RWPE1 (cell line): ENCODE measurements at regions of chr14 and their contacts with region 1.

Region 1: DNA sequence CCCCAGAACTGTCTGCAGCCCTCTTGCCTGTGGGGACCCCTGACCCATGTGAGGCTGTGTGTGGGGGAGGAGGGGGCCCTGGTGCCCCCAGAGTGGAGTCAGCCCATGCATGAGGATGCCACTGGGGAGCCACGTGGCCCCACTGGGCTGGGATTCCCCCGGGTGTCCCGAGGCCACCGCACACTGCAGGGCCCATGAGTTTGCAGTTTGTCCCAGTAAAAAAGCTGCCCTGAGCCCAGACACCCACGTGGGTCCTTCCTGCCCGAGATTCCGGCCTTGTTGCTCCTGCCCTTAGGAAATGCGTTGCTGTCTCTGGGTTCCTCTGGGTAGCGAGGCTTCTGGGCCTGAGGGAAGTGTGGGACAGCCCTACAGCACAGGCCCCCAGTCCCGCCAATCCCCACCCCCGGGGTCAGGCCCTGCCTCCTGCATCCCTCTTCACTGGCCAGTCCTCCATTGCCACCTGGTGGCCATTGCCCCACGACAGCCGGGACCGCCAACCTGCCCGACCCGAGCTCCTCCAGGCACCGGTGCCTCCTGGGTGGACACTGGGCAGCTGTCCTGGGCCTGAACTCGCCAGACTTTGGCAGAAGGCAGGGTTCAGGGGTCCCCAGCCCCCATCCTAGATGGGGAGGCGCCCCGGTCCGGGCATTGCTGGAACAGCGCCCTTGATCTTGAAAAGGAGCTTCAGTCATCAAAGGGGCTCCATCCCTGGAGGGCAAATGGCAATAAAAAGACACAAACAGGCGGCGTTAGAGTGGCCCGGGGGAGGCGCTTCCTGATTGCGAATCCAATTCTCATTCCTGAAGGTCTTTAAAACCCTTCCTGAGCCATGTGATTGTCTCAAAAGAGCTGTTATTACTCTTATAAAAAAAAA is 15.6 kb upstream of the C14orf180 start:
- DNase-seq: peak; percentile 85
- H3K27ac ChIP-seq: no peak overlapping the region
- CTCF ChIP-seq: peak; percentile 91

Region 2: GRCh38 chr14:104137297-104138097 is 426.5 kb before region 1 on chr14:
- CTCF ChIA-PET with region 1: interaction called, 29 read pairs
- POLR2A ChIA-PET with region 1: no interaction called
- DNase-seq: peak; percentile 67
- H3K27ac ChIP-seq: peak overlapping the region; percentile 9; the same call in 1 of the 2 replicates
- CTCF ChIP-seq: peak; percentile 85

Region 3: GRCh38 chr14:104366931-104367865 is 196.8 kb before region 1 on chr14:
- CTCF ChIA-PET with region 1: interaction called, 11 read pairs
- POLR2A ChIA-PET with region 1: no interaction called
- DNase-seq: no peak
- H3K27ac ChIP-seq: no peak overlapping the region
- CTCF ChIP-seq: no peak

Region 4: DNA sequence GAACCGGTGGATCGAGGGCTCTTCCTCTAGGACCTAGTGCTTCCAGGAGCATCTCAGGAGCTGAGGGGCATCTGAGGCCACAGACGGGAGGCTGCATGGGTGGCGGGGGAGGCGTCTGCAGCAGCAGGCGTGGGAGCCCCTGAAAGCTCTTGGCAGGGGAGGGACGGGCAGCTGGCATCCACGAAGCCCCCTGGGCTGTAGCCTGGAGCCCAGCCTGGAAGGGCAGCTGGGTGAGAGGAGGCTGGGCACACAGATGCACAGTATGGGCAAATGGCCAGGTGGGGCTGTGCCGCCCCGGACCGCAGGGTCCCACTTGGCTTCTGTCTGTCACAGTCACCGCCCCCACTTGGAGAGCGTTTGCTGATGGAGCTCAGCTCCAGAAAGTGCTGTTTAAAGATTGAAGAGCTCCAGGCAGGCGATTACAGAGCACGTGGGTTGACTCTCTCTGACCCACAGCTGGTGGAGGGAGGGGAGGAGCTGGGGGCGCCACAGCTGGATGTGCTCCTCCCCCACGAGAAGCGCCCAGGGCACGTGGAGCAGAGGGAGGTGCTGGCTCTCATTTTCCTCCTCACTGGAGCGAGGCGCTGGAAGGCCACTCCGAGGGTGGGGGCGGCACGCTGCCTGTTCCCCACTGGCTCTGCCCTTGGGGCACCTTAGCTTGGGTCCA is 139.4 kb before region 1 on chr14:
- CTCF ChIA-PET with region 1: no interaction called
- POLR2A ChIA-PET with region 1: no interaction called
- DNase-seq: no peak
- H3K27ac ChIP-seq: no peak overlapping the region
- CTCF ChIP-seq: no peak

Region 5: DNA sequence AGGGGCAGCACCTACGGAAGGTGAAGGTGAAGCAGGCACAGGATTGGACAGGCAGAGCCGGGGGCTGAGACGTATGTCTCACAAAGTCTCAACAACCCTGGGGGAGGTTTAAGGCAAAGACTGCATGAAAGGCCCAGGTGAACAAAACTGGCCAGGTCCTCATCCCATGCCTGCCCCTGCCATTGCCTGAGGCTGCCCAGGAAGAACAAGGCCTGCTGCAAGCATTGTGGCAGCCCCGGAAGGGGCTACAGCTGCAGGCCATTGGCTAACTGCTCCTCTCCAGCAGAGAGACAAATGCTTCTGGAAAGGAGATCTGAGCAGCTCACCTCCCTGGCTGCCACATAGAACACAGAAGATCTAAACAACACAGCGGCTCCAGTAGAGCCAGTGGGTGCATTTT is 61.0 kb after region 1 on chr14:
- CTCF ChIA-PET with region 1: no interaction called
- POLR2A ChIA-PET with region 1: no interaction called
- DNase-seq: no peak
- H3K27ac ChIP-seq: no peak overlapping the region
- CTCF ChIP-seq: no peak